Left ventricle myocardium inferior (tissue), 1 donor: ENCODE measurements at regions of chr12 and their contacts with region 1.

Region 1: DNA sequence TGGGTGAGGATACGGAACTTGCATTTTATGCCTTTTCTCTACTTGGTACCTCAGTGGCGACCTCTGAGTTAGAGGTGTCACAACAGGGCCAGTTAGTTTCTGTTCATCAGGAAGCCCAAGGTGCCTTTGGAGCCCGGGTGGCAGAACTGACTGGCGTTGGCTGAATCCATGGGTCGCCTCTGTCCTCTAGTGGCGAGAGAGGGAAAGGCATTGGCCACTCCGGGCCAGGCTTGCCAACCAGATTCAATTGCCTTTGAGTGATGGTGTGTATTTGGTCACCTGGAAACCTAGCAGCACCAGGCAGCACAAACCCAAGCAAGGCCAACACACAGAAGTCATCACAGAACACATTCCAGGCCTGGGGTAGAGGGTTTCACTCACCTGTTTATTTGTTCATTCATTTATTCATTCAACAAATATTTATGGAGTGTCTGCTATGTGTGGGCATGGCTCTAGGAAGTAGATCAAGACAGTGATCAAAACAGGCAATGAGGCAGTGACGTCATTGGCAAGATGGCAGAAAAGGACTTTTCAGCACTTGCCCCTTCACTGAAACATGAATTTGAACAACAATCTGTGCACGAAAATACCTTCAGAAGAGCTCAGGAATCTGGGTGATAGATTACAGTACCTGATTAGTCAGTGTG is 40.5 kb upstream of the KCNA5 start:
- DNase-seq: peak; percentile 54
- H3K4me3 ChIP-seq: no peak overlapping the region
- H3K27ac ChIP-seq: no peak overlapping the region
- H3K4me1 ChIP-seq: peaks cover 3% of the 10 kb centered on the region
- H3K27me3 ChIP-seq: peaks cover 40% of the 10 kb centered on the region
- CTCF ChIP-seq: peak; percentile 94

Region 2: GRCh38 chr12:4857472-4858291 is 145.5 kb before region 1 on chr12:
- intact Hi-C with region 1: loop called (anchors 5 kb)
- DNase-seq: peak; percentile 62
- H3K4me3 ChIP-seq: peak overlapping the region; percentile 46
- H3K27ac ChIP-seq: peak overlapping the region; percentile 20
- H3K4me1 ChIP-seq: peaks cover 32% of the 10 kb centered on the region
- H3K27me3 ChIP-seq: peaks cover 32% of the 10 kb centered on the region
- CTCF ChIP-seq: peak; percentile 93

Region 3: GRCh38 chr12:5138845-5139244 is 135.7 kb after region 1 on chr12:
- intact Hi-C with region 1: no loop called
- DNase-seq: no peak
- H3K4me3 ChIP-seq: no peak overlapping the region
- H3K27ac ChIP-seq: no peak overlapping the region
- H3K4me1 ChIP-seq: no peaks in the 10 kb centered on the region
- H3K27me3 ChIP-seq: peaks cover 42% of the 10 kb centered on the region
- CTCF ChIP-seq: no peak

Region 4: GRCh38 chr12:5258498-5258897 is 255.4 kb after region 1 on chr12:
- intact Hi-C with region 1: no loop called
- DNase-seq: no peak
- H3K4me3 ChIP-seq: no peak overlapping the region
- H3K27ac ChIP-seq: no peak overlapping the region
- H3K4me1 ChIP-seq: no peaks in the 10 kb centered on the region
- H3K27me3 ChIP-seq: peaks cover 37% of the 10 kb centered on the region
- CTCF ChIP-seq: no peak